CD4-positive, alpha-beta memory T cell (primary cell): ENCODE measurements at regions of chr1 and their contacts with region 1.

Region 1: DNA sequence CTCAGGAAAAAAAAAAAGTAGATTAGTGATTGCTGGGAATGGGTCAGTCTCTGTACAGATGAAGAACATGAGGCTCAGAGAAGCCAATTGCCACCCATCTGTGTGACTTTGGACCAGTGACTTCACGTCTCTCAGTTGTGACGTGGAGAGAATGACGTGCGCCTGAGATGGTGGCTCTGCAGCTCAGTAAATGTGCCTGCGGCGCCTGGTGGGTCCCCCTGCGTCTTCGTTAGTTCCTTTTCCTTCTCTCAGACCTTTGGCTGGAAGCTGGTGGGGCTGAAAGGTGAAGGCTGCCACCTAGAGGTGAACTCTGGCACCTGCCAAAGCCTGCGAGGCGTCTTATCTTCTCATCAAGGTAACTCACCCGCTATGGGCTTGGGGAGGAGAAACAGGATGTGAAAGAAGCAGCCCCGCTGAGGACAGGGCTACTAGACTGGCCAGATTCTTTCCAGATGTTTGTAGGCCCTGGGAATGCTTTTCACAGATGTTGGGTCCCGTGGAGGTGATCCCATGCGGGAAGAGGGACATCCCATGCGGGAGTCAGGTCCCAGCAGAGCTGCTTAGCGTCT is 8.7 kb upstream of the E2F2 start:
- DNase-seq: peak; percentile 91 to 95 (median 92)
- H3K4me3 ChIP-seq: no peak overlapping the region
- H3K4me3 Mint-ChIP-seq: peak overlapping the region in 7 of 8 donors; percentile 23 to 73 (median 52)
- H3K27ac ChIP-seq: no peak overlapping the region
- H3K27ac Mint-ChIP-seq: peak overlapping the region; percentile 68 to 92 (median 89)
- H3K4me1 ChIP-seq: peaks cover 22% of the 10 kb centered on the region
- H3K4me1 Mint-ChIP-seq: peaks cover 12 to 32% (median 23%) of the 10 kb centered on the region in 4 donors
- H3K27me3 ChIP-seq: no peaks in the 10 kb centered on the region
- H3K27me3 Mint-ChIP-seq: no peaks in the 10 kb centered on the region

Region 2: GRCh38 chr1:23484253-23485001 is 55.4 kb before region 1 on chr1:
- CTCF ChIA-PET with region 1: interaction called, 12 read pairs
- POLR2A ChIA-PET with region 1: interaction called, 4 read pairs
- intact Hi-C with region 1: no loop called
- DNase-seq: peak; percentile 88 to 95 (median 92)
- H3K4me3 ChIP-seq: peak overlapping the region in 1 of 2 donors; percentile 64
- H3K4me3 Mint-ChIP-seq: peak overlapping the region; percentile 87 to 94 (median 89)
- H3K27ac ChIP-seq: peak overlapping the region; percentile 6
- H3K27ac Mint-ChIP-seq: peak overlapping the region in 6 of 7 donors; percentile 79 to 95 (median 88)
- H3K4me1 ChIP-seq: peaks cover 15% of the 10 kb centered on the region
- H3K4me1 Mint-ChIP-seq: peaks cover 11 to 20% (median 16%) of the 10 kb centered on the region in 4 donors
- H3K27me3 ChIP-seq: no peaks in the 10 kb centered on the region
- H3K27me3 Mint-ChIP-seq: peaks cover 3 to 6% of the 10 kb centered on the region in 2 donors

Region 3: DNA sequence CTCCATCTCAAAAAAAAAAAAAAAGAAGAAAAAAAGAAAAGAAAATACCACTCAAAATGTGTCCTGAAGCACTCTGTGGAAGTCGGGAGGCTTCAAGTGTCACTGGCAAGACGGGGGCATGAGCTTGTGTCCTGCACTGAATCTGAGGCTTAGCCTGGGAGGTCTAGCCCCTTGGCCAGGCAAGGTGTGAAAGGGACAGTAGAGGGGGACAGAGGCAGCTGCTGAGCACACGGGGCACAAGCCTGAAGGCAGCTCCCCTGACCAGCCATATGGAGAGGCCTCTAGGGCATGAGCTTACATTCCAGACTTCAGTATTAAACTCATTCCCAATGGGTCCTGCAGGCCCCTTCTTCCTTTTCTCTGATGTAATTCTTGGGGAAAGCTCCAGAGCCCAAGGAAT is 32.3 kb before region 1 on chr1:
- CTCF ChIA-PET with region 1: interaction called, 924 read pairs
- POLR2A ChIA-PET with region 1: interaction called, 135 read pairs
- intact Hi-C with region 1: no loop called
- DNase-seq: no peak
- H3K4me3 ChIP-seq: no peak overlapping the region
- H3K4me3 Mint-ChIP-seq: no peak overlapping the region
- H3K27ac ChIP-seq: no peak overlapping the region
- H3K27ac Mint-ChIP-seq: peak overlapping the region in 3 of 7 donors; percentile 47 to 61 (median 48)
- H3K4me1 ChIP-seq: no peaks in the 10 kb centered on the region
- H3K4me1 Mint-ChIP-seq: peaks cover 0 to 2% (median 0%) of the 10 kb centered on the region in 4 donors
- H3K27me3 ChIP-seq: no peaks in the 10 kb centered on the region
- H3K27me3 Mint-ChIP-seq: no peaks in the 10 kb centered on the region

Region 4: GRCh38 chr1:23613191-23614031 is 73.6 kb after region 1 on chr1:
- CTCF ChIA-PET with region 1: interaction called, 6 read pairs
- POLR2A ChIA-PET with region 1: interaction called, 13 read pairs
- intact Hi-C with region 1: no loop called
- DNase-seq: peak; percentile 44 to 67 (median 62)
- H3K4me3 ChIP-seq: peak overlapping the region in 1 of 2 donors; percentile 23
- H3K4me3 Mint-ChIP-seq: peak overlapping the region; percentile 60 to 79 (median 71)
- H3K27ac ChIP-seq: peak overlapping the region; percentile 62
- H3K27ac Mint-ChIP-seq: peak overlapping the region; percentile 83 to 94 (median 92)
- H3K4me1 ChIP-seq: peaks cover 83% of the 10 kb centered on the region
- H3K4me1 Mint-ChIP-seq: peaks cover 57 to 88% (median 75%) of the 10 kb centered on the region in 4 donors
- H3K27me3 ChIP-seq: no peaks in the 10 kb centered on the region
- H3K27me3 Mint-ChIP-seq: no peaks in the 10 kb centered on the region

Region 5: GRCh38 chr1:23627069-23627735 is 87.4 kb after region 1 on chr1:
- CTCF ChIA-PET with region 1: interaction called, 1,081 read pairs
- POLR2A ChIA-PET with region 1: interaction called, 616 read pairs
- intact Hi-C with region 1: no loop called
- DNase-seq: peak; percentile 43 to 57 (median 53)
- H3K4me3 ChIP-seq: peak overlapping the region; percentile 57 to 58
- H3K4me3 Mint-ChIP-seq: peak overlapping the region; percentile 91 to 98 (median 94)
- H3K27ac ChIP-seq: peak overlapping the region; percentile 55
- H3K27ac Mint-ChIP-seq: peak overlapping the region; percentile 85 to 98 (median 95)
- H3K4me1 ChIP-seq: peaks cover 42% of the 10 kb centered on the region
- H3K4me1 Mint-ChIP-seq: peaks cover 39 to 60% (median 50%) of the 10 kb centered on the region in 4 donors
- H3K27me3 ChIP-seq: no peaks in the 10 kb centered on the region
- H3K27me3 Mint-ChIP-seq: no peaks in the 10 kb centered on the region